ENCODE measurements at regions of chr17 and their contacts with region 1.

Region 1: DNA sequence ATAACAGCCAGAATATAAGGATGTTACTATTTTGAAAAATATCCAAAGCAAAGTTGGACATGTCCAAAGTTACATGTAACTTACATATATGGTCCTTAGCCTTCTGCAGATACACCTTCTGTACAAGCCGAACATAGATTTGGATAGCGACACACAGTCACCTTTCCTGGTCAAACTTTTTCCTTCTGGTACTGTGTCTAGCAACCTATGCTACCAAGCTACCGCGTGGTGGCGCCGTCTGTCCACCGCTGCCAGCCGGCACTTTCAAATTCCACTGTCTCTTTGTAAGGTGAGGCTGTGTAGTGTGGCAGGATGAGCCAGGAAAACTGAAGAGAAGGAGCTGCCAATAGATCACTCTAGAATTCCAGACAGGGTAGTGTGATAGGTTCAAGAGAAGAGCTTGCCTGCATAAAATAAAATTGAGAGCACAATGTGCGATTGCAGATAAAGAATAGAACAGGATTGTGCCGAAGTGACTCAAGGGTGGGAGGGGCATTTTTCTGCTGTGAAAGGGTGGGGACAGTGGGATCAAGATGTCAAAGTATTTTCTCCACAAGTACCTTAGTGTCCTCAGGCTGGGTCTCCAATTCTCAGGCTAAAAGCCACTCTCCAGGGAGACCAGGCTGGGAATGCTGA is 366.9 kb downstream of the SLC39A11 start:
- DNase-seq: no peak
- H3K4me3 ChIP-seq: no peak overlapping the region
- H3K27ac ChIP-seq: no peak overlapping the region
- H3K4me1 ChIP-seq: no peaks in the 10 kb centered on the region
- H3K27me3 ChIP-seq: no peaks in the 10 kb centered on the region
- CTCF ChIP-seq: peak in 3 of 4 experiments; percentile 58 to 67 (median 66)
- EP300 ChIP-seq: no peak
- POLR2A ChIP-seq: no peak

Region 2: DNA sequence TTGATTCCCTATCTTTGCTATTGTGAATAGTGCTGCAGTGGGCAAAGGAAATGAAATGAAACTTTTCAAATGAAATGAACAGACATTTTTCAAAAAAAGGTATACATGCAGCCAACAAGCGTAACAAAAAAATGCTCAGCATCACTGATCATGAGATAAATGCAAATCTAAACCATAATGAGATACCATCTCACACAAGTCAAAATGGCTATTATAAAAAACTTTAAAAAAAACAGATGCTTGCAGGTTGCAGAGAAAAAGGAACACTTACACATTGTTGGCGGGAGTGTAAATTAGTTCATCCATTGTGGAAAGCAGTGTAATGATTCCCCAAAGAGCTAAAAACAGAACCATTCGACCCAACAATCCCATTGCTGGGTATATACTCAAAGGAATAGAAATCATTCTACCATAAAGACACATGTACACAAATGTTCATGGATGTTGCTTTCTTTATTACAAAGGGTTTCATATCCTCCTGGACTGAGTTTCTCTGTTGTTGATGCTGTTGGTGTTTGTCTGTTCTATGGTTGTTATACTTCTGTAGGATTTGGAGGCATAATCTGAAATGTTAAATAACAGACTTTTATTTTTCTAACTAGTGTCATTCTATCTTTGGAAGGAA is 704.0 kb before region 1 on chr17:
- intact Hi-C with region 1: no loop called
- DNase-seq: no peak
- H3K4me3 ChIP-seq: no peak overlapping the region
- H3K27ac ChIP-seq: no peak overlapping the region
- H3K4me1 ChIP-seq: no peaks in the 10 kb centered on the region
- H3K27me3 ChIP-seq: no peaks in the 10 kb centered on the region
- CTCF ChIP-seq: no peak
- EP300 ChIP-seq: no peak
- POLR2A ChIP-seq: no peak

Region 3: GRCh38 chr17:72952220-72952984 is 226.9 kb after region 1 on chr17:
- intact Hi-C with region 1: no loop called
- DNase-seq: no peak
- H3K4me3 ChIP-seq: no peak overlapping the region
- H3K27ac ChIP-seq: no peak overlapping the region
- H3K4me1 ChIP-seq: no peaks in the 10 kb centered on the region
- H3K27me3 ChIP-seq: no peaks in the 10 kb centered on the region
- CTCF ChIP-seq: no peak
- EP300 ChIP-seq: no peak
- POLR2A ChIP-seq: no peak

Region 4: DNA sequence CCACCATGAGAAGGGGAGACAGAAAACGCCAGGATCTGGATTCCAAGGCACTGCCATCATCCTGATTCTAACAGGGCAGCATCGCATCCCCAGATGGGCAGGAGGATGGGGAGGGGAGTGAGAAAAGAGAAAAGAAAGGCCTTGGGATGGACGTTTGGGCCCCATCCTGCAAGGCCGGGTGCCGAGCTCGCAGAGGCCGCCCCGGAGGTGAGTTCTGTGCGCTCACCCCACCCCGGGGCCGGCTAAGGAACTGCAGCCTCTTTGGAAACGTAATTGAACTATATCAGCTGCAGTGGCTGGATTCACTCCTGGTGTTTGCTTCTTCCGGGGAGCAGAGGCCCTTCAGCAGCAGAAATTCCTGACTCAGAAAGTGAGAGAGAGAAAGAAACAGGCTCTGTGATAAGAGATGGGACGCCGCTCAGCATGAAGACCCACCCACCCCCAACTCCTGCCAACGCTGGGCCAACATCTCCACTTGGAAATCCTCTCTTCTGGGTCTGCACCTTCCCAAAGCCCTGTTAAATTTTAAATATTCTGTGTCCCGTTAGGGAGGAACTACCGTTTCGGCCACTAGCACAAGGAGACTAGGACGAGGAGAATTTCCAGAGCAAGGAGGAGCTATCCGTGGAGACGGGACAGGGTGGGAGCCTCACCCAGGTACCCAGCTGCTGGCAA is 430.8 kb after region 1 on chr17:
- intact Hi-C with region 1: loop called (anchors 1 kb)
- DNase-seq: peak; percentile 70
- H3K4me3 ChIP-seq: no peak overlapping the region
- H3K27ac ChIP-seq: no peak overlapping the region
- H3K4me1 ChIP-seq: peaks cover 0 to 4% (median 2%) of the 10 kb centered on the region in 4 donors
- H3K27me3 ChIP-seq: peaks cover 0 to 5% (median 0%) of the 10 kb centered on the region in 3 donors
- CTCF ChIP-seq: peak in 3 of 4 experiments; percentile 51 to 76 (median 68)
- EP300 ChIP-seq: no peak
- POLR2A ChIP-seq: no peak

Region 5: GRCh38 chr17:73231841-73232586 is 506.5 kb after region 1 on chr17:
- intact Hi-C with region 1: loop called (anchors 10 kb)
- DNase-seq: peak; percentile 97
- H3K4me3 ChIP-seq: peak overlapping the region; percentile 82 to 99 (median 94)
- H3K27ac ChIP-seq: peak overlapping the region; percentile 80 to 91 (median 88)
- H3K4me1 ChIP-seq: peaks cover 0 to 54% (median 46%) of the 10 kb centered on the region in 4 donors
- H3K27me3 ChIP-seq: no peaks in the 10 kb centered on the region
- CTCF ChIP-seq: peak in 2 of 4 experiments; percentile 28 to 31
- EP300 ChIP-seq: no peak
- POLR2A ChIP-seq: peak; percentile 19 to 66

Measured in sigmoid colon (tissue), 7 donors.